Body of pancreas (tissue), 4 donors: ENCODE measurements at regions of chr7 and their contacts with region 1.

Region 1: GRCh38 chr7:71731740-71732139 is 599.8 kb downstream of the GALNT17 start:
- DNase-seq: no peak
- ATAC-seq: no peak
- H3K4me3 ChIP-seq: no peak overlapping the region
- H3K27ac ChIP-seq: no peak overlapping the region
- H3K4me1 ChIP-seq: peaks cover 5% of the 10 kb centered on the region
- H3K27me3 ChIP-seq: no peaks in the 10 kb centered on the region
- CTCF ChIP-seq: no peak
- POLR2A ChIP-seq: no peak

Region 2: DNA sequence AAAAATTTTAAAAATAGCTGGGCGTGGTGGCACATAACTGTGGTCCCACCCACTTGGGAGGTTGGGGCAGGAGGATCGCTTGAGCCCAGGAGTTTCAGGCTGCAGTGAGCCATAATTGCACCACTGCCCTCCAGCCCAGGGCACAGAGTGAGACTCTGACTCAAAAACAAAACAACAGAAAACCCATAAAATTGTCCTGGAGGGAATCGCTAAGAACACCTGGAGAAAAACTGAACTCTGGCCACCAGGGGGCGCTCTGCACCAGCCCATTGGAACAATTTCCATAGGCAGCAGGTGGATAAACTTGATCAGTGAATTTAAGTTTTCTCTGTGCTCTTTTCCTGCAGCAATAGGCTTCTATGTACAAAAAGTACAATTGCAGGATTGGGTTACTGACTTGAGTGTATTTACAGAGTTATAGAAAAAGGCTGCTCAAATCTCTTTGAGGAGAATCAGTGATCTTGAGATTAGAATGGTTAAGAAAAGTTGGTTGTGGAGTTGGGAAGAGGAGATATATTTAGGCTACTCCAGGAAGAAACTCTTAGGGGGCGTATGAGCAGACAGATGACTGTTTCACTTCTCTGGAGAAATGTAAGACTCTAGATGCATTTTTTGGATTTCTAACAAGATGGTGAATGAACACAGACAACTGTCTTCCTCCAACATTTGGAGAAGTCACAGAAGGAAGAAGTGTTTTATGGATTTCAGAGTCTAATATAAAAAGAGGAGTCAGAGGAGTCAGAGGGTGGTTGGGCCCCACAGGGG is 874.7 kb before region 1 on chr7:
- intact Hi-C with region 1: loop called (anchors 2 kb)
- DNase-seq: peak; percentile 60 to 81 (median 72)
- ATAC-seq: no peak
- H3K4me3 ChIP-seq: no peak overlapping the region
- H3K27ac ChIP-seq: no peak overlapping the region
- H3K4me1 ChIP-seq: no peaks in the 10 kb centered on the region
- H3K27me3 ChIP-seq: no peaks in the 10 kb centered on the region
- CTCF ChIP-seq: peak; percentile 69 to 90 (median 80)
- POLR2A ChIP-seq: no peak

Region 3: GRCh38 chr7:71239586-71240268 is 492.0 kb before region 1 on chr7:
- intact Hi-C with region 1: no loop called
- DNase-seq: no peak
- ATAC-seq: no peak
- H3K4me3 ChIP-seq: no peak overlapping the region
- H3K27ac ChIP-seq: no peak overlapping the region
- H3K4me1 ChIP-seq: peaks cover 27% of the 10 kb centered on the region
- H3K27me3 ChIP-seq: no peaks in the 10 kb centered on the region
- CTCF ChIP-seq: no peak
- POLR2A ChIP-seq: no peak

Region 4: GRCh38 chr7:71652510-71652909 is 79.2 kb before region 1 on chr7:
- intact Hi-C with region 1: no loop called
- DNase-seq: no peak
- ATAC-seq: no peak
- H3K4me3 ChIP-seq: no peak overlapping the region
- H3K27ac ChIP-seq: no peak overlapping the region
- H3K4me1 ChIP-seq: no peaks in the 10 kb centered on the region
- H3K27me3 ChIP-seq: no peaks in the 10 kb centered on the region
- CTCF ChIP-seq: no peak
- POLR2A ChIP-seq: no peak

Region 5: DNA sequence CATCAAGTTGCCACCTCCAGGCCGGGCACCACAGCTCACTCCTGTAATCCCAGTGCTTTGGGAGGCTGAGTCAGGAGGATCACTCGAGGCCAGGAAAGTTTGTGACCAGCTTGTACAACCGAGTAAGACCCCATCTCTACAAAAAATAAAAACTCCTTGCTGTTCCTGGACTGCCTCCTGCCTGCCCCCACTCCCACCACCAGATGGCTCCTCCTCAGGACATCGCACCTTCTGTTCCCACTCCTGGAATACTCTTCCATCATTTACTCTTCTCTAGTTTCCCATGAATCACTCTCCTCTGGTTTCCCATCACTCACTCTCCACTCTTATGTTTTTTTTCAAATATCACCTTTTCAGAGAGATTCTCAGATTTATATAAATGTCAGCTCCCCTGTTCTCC is 139.7 kb after region 1 on chr7:
- intact Hi-C with region 1: no loop called
- DNase-seq: no peak
- ATAC-seq: no peak
- H3K4me3 ChIP-seq: no peak overlapping the region
- H3K27ac ChIP-seq: no peak overlapping the region
- H3K4me1 ChIP-seq: no peaks in the 10 kb centered on the region
- H3K27me3 ChIP-seq: no peaks in the 10 kb centered on the region
- CTCF ChIP-seq: peak in 2 of 7 experiments; percentile 9 to 24
- POLR2A ChIP-seq: no peak

Region 6: GRCh38 chr7:71937840-71938371 is 206.2 kb after region 1 on chr7:
- intact Hi-C with region 1: no loop called
- DNase-seq: no peak
- ATAC-seq: no peak
- H3K4me3 ChIP-seq: no peak overlapping the region
- H3K27ac ChIP-seq: no peak overlapping the region
- H3K4me1 ChIP-seq: no peaks in the 10 kb centered on the region
- H3K27me3 ChIP-seq: no peaks in the 10 kb centered on the region
- CTCF ChIP-seq: no peak
- POLR2A ChIP-seq: no peak